HEK293 (cell line): ENCODE measurements at regions of chr10 and their contacts with region 1.

Region 1: DNA sequence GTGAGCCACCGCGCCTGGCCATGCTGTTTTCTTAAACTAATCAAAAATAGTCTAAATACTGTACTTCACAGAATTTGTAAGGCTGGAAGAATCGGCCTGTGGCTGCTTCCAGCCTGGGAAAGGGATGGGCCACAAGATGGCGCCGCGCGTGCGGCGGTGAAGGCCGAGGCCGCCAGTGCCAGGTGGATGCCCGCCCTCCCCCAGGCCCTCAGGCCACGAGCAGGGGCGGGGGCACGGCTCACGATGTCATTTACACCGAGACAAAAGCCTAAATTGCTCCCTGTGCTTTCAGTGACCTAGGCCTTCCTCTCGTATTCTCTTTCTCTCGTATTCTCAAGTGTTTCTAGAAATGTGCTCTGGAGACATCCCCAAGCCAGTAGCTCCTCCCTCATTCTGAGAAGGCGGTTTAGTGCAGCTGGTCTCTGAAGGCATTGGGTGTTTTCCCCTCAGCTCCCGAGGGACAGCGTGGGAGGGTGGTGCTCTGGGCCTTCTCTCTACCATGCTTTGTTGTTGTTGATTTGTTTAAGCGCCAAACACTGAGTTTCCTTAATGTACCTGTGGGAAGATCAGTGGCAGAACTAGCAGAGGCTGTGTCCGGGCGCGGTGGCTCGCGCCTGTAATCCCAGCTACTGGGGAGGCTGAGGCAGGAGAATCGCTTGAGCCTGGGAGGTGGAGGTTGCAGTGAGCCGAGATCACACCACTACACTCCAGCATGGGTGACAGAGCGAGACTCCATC is 68.4 kb downstream of the CDC123 start:
- H3K4me3 ChIP-seq: peak overlapping the region; percentile 13; the same call in 1 of the 2 replicates
- H3K27ac ChIP-seq: peak overlapping the region; percentile 57; the same call in 1 of the 2 replicates
- H3K4me1 ChIP-seq: no peaks in the 10 kb centered on the region
- CTCF ChIP-seq: peak; percentile 94

Region 2: DNA sequence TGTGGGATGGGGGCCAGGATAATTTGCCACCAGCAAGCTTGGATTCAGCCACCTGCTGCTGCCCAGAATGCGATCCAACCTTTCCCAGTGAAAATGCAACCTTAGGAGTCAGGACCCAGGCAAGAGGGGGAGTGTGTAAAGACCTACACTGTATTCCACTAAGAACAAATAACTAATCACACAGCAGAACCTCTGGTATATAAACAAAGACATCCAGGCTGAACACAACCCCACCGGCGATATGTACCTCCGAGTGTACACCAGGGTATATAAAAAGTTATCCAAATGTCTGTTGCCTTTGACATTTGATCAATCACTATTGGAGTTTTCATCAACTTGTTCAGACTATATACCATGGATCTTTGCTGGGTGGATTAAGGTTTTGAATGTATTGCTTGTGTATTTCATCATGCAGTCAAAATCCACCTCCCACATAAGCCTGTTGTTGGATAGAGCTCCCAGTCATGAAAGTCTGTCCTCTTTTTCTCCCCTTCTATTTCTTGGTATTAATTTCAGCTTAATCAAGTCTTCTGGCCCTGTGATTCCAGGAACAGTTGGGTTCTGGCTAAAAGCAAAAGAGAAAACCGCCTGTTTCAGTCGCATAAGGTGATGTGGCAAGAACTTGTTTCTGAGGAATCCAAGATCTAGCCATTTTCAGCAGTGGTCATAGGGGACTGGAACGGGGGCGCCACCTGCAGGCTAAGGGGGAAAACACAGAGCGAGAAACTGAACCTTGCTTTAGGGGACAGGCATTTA is 446.4 kb after region 1 on chr10:
- CTCF ChIA-PET with region 1: interaction called, 18 read pairs
- POLR2A ChIA-PET with region 1: no interaction called
- H3K4me3 ChIP-seq: no peak overlapping the region
- H3K27ac ChIP-seq: peak overlapping the region; percentile 50
- H3K4me1 ChIP-seq: peaks cover 22% of the 10 kb centered on the region
- CTCF ChIP-seq: peak; percentile 72